Panc1 (cell line): ENCODE measurements at regions of chr6 and their contacts with region 1.

Region 1: GRCh38 chr6:117976030-117976651 is 69.1 kb downstream of the SLC35F1 start:
- DNase-seq: peak; percentile 15
- ATAC-seq: peak; percentile 78; the same call in 1 of the 2 replicates
- H3K4me3 ChIP-seq: no peak overlapping the region
- H3K27ac ChIP-seq: no peak overlapping the region
- H3K4me1 ChIP-seq: no peaks in the 10 kb centered on the region
- H3K27me3 ChIP-seq: no peaks in the 10 kb centered on the region
- CTCF ChIP-seq: peak; percentile 80; the same call in 1 of the 2 replicates

Region 2: GRCh38 chr6:117733341-117733740 is 242.8 kb before region 1 on chr6:
- CTCF ChIA-PET with region 1: no interaction called
- POLR2A ChIA-PET with region 1: no interaction called
- in situ Hi-C with region 1: no loop called
- intact Hi-C with region 1: no loop called
- DNase-seq: no peak
- ATAC-seq: no peak
- H3K4me3 ChIP-seq: no peak overlapping the region
- H3K27ac ChIP-seq: no peak overlapping the region
- H3K4me1 ChIP-seq: no peaks in the 10 kb centered on the region
- H3K27me3 ChIP-seq: peaks cover 2% of the 10 kb centered on the region; the same call in 1 of the 2 replicates
- CTCF ChIP-seq: no peak

Region 3: GRCh38 chr6:118263921-118264486 is 287.9 kb after region 1 on chr6:
- CTCF ChIA-PET with region 1: interaction called, 4 read pairs
- POLR2A ChIA-PET with region 1: no interaction called
- in situ Hi-C with region 1: no loop called
- intact Hi-C with region 1: loop called (anchors 5 kb)
- DNase-seq: no peak
- ATAC-seq: 0 out of 2 replicates have a peak, but pooled peaks have one; percentile 81
- H3K4me3 ChIP-seq: no peak overlapping the region
- H3K27ac ChIP-seq: no peak overlapping the region
- H3K4me1 ChIP-seq: no peaks in the 10 kb centered on the region
- H3K27me3 ChIP-seq: no peaks in the 10 kb centered on the region
- CTCF ChIP-seq: peak; percentile 65

Region 4: DNA sequence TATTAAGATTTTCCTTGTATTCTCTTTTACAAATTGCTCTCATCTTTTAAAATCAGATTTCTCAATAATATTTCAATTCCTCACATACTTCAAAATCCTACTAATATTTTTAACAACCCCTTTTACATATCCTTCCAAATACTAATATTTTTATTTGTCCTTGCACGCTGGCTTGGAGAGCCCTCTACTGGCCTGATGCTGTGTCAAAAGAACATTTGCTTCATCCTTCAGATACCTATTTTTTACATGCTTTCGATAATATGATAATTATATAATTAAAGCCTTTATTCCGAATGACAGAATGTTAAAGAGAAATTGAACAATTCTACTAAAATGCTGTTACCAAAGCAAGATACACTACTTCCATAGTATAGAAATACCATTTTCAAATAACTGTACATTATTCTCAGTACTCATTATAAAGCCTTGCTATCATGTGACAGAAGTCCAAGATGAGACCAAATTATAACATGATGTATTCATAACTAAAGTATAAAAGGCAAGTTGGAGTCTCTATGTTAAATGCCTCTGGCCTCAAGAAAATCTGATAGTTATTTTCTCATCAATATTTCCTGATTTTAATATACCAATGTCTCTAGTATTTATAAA is 533.0 kb after region 1 on chr6:
- CTCF ChIA-PET with region 1: no interaction called
- POLR2A ChIA-PET with region 1: no interaction called
- in situ Hi-C with region 1: no loop called
- intact Hi-C with region 1: loop called (anchors 10 kb)
- DNase-seq: peak; percentile 32
- ATAC-seq: no peak; the same call in 1 of the 2 replicates
- H3K4me3 ChIP-seq: no peak overlapping the region
- H3K27ac ChIP-seq: no peak overlapping the region
- H3K4me1 ChIP-seq: no peaks in the 10 kb centered on the region
- H3K27me3 ChIP-seq: no peaks in the 10 kb centered on the region
- CTCF ChIP-seq: peak; percentile 87; the same call in 1 of the 2 replicates

Region 5: GRCh38 chr6:118551063-118552053 is 575.2 kb after region 1 on chr6:
- CTCF ChIA-PET with region 1: no interaction called
- POLR2A ChIA-PET with region 1: no interaction called
- in situ Hi-C with region 1: no loop called
- intact Hi-C with region 1: loop called (anchors 5 kb)
- DNase-seq: peak; percentile 30
- ATAC-seq: peak; percentile 81
- H3K4me3 ChIP-seq: no peak overlapping the region
- H3K27ac ChIP-seq: no peak overlapping the region
- H3K4me1 ChIP-seq: no peaks in the 10 kb centered on the region
- H3K27me3 ChIP-seq: no peaks in the 10 kb centered on the region
- CTCF ChIP-seq: peak; percentile 75; the same call in 1 of the 2 replicates